ENCODE measurements at regions of chr7 and their contacts with region 1.

Region 1: GRCh38 chr7:117076426-117076943 is 123.2 kb downstream of the ST7 start:
- DNase-seq: peak; percentile 49
- ATAC-seq: peak; percentile 47 to 83

Region 2: GRCh38 chr7:116340943-116341907 is 735.3 kb before region 1 on chr7:
- intact Hi-C with region 1: no loop called
- DNase-seq: no peak
- ATAC-seq: no peak

Region 3: DNA sequence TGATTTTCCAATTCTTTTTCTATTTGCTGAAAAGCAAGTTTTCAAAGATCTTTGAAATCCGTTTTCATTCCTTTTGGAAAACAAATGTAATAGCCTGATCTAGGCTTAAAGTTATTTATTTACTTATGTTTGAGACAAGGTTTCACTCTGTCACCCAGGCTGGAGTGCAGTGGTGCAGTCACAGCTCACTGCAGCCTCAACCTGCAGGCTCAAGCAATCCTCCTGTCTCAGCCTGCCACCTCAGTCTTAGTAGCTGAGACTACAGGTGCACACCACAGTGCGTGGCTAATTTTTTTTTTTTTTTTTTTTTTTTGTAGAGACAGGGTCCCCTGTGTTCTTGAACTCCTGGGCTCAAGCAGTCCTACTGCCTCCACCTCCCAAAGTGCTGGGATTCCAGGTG is 118.6 kb before region 1 on chr7:
- intact Hi-C with region 1: no loop called
- DNase-seq: no peak
- ATAC-seq: no peak

Region 4: DNA sequence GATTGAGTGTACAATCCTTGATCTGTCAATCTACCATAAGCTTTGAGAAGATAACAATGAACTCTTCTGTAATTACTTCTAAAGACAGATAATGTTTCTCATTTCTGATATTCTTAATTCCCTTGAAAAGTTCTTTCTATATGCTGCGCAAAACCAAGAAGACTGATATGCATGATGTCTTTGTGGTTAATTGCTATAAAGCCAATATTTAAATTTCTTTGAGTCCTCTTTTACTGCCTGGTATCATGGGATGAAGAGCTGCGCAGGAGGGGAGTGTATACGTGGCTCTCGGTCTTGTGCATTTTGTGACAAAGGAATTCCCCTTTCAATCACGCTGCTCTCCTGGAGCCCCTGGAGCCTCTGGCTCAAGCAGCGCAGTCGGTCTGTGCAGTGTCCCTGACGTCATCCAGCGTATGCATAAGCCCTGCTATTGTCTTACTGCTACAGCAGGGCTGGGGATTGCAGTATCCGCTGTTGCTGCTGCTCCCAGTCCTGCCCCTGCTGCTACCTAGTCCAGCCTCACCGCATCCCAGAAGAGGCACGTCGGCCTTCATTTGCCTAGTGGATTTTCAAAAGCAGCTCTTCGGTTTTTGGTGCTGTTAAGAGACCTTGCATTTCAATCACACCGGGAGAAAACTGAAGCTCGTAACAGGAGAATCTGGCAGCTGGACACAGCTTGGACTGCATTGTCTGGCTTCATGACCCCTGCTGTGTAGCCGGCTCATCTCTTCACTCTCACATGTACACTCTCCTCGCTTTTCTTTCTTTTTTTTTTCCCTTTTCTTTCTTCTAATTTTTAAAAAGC is 56.5 kb before region 1 on chr7:
- intact Hi-C with region 1: loop called in 1 of 2 experiments (anchors 5 kb)
- DNase-seq: peak; percentile 79
- ATAC-seq: peak; percentile 93 to 98

Region 5: GRCh38 chr7:117780832-117781231 is 704.3 kb after region 1 on chr7:
- intact Hi-C with region 1: no loop called
- DNase-seq: no peak
- ATAC-seq: peak; percentile 53 to 60

Measured in left cardiac atrium (tissue), 4 donors.